Vagina (tissue), 2 donors: ENCODE measurements at regions of chr19 and their contacts with region 1.

Region 1: DNA sequence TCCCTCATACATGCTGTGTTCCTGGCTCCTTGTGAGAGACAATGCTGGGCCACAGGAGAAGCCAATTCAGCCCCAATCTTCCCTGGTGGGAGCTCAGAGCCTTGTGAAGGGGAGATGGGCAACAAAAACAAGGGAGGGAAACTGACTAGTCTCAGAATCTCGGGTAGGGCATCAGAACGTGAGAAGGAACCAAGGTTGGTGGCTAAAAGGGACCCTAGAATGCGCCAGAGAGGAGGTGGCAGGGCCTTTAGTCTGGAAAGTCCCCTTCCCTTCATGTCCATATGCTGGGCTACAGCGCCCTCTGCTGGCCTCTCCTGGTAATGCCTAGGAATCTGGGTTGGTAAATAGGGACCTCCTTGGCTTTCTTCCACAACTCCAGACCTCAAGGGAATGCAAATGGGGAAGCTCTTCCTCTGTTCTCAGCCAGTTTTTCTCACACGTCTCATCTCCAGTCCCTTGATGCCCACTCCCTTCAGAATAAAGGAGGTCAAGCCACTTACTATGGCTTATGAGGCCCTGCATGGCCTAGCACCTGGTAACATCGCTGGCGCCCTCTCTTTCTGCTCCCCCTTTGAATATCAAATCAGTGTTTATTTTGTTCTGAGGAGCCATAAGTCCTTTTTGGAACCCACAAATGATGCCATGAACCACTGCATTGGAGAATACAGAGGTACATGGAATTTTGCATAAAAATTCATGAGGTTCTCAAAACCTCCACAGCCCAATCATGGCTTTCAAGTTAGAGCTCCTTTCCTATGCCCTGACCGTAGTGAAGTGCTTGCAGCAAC is 1.4 kb upstream of the CCDC97 start:
- DNase-seq: no peak
- H3K4me3 ChIP-seq: peak overlapping the region; percentile 69 to 79
- H3K27ac ChIP-seq: peak overlapping the region; percentile 94
- H3K4me1 ChIP-seq: peaks cover 40% of the 10 kb centered on the region
- H3K27me3 ChIP-seq: no peaks in the 10 kb centered on the region
- CTCF ChIP-seq: peak; percentile 96 to 98 (median 97)
- POLR2A ChIP-seq: no peak

Region 2: GRCh38 chr19:41206926-41207750 is 101.4 kb before region 1 on chr19:
- intact Hi-C with region 1: loop called (anchors 10 kb)
- DNase-seq: no peak
- H3K4me3 ChIP-seq: peak overlapping the region in 1 of 2 donors; percentile 7
- H3K27ac ChIP-seq: peak overlapping the region; percentile 75
- H3K4me1 ChIP-seq: peaks cover 11% of the 10 kb centered on the region
- H3K27me3 ChIP-seq: no peaks in the 10 kb centered on the region
- CTCF ChIP-seq: no peak
- POLR2A ChIP-seq: no peak

Region 3: DNA sequence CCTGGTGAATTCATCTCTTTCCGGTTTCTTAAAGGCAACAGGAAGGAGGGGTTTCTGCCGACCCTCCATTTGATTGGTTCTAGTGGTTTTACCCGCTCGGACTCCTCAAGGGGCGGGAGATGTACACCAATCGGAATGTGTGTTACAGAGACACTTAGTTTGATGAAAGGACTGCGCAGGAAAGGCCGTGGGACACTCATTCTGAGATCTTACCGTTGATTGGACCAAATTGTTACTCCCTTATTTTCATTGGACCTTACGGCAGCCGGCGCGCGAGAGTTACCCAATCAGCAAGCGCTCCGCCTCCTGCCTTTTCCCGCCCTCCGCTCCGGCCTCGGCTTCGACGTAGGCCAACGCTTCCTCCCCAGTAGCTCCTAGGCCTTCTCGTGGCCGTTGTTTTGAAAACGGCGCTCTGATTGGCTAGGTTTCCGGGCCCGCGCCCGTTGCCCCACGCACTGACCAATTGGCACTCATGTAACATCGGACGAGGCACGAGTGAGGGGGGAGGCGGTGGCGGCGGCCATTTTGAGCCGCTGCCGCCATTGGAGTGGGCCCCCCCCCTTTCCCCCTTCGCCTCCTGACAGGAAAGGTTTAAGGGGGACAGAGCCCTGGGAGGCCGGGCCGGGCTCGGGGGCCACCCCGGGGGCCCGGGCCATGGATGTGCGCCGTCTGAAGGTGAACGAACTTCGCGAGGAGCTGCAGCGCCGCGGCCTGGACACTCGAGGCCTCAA is 44.6 kb before region 1 on chr19 and contains the start of gene HNRNPUL1:
- intact Hi-C with region 1: loop called (anchors 5 kb)
- DNase-seq: peak; percentile 100
- H3K4me3 ChIP-seq: peak within 1 kb of the TSS; percentile 80 to 88
- H3K27ac ChIP-seq: peak within 1 kb of the TSS; percentile 98
- H3K4me1 ChIP-seq: peaks cover 28% of the 10 kb centered on the region
- H3K27me3 ChIP-seq: no peaks in the 10 kb centered on the region
- CTCF ChIP-seq: no peak
- POLR2A ChIP-seq: no peak
- total RNA-seq, gene HNRNPUL1: 116 TPM